Upper lobe of right lung (tissue), 1 donor: ENCODE measurements at regions of chr4 and their contacts with region 1.

Region 1: DNA sequence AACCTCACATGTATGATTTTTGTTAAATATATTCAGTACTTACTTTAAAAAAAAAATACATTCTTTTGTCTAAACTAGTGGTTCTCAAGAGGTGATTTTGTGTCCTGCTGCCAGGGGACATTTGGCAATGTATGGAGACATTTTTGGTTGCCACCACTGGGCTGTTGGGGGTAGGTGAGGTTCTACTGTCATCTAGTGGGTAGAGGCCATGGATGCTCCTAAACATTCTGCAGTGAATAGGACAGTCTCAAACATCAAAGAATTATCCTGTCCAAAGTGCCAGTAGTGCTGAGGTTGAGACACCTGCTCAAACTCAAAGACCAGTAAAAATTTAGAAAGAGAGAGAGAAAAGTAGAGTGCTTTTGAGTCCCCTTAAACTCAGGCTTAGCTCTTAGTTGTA is 32.9 kb upstream of the PGM2 start:
- DNase-seq: no peak
- ATAC-seq: peak; percentile 87
- H3K4me3 ChIP-seq: no peak overlapping the region
- H3K27ac ChIP-seq: no peak overlapping the region
- H3K4me1 ChIP-seq: no peaks in the 10 kb centered on the region
- H3K27me3 ChIP-seq: no peaks in the 10 kb centered on the region
- CTCF ChIP-seq: peak; percentile 47

Region 2: GRCh38 chr4:37603070-37603468 is 190.5 kb before region 1 on chr4:
- intact Hi-C with region 1: loop called (anchors 10 kb)
- DNase-seq: peak; percentile 91
- ATAC-seq: peak; percentile 97
- H3K4me3 ChIP-seq: no peak overlapping the region
- H3K27ac ChIP-seq: no peak overlapping the region
- H3K4me1 ChIP-seq: peaks cover 4% of the 10 kb centered on the region
- H3K27me3 ChIP-seq: no peaks in the 10 kb centered on the region
- CTCF ChIP-seq: peak; percentile 98

Region 3: DNA sequence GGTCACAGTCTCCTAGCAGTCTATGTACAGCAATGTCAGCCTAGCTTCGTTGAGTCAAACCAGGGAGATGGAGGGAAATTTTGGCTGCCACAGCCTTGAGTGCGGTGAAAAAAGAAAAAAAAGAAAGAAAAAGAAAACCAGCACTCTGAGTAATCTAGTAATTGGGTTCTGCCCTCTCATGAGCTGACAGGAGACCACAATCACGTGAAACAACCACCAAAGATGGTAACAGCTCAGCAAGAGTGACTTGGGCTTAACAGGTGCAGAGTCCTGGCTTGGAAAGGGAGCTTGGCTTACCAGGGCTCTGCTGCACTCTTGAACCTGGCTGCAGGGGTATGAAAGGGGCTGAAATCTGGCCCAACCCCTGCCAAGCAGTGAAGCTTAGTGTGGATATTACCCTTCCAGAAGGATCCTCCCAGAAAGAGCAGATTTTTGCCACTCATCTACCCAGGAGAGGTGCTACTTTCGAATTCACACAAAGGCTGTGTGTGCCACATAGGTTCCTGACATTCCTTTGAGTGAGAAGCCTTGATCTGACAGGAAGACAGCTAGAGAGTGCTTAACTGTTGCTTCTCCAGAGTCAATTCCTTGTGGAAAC is 517.0 kb after region 1 on chr4:
- intact Hi-C with region 1: no loop called
- DNase-seq: no peak
- ATAC-seq: peak; percentile 35
- H3K4me3 ChIP-seq: no peak overlapping the region
- H3K27ac ChIP-seq: no peak overlapping the region
- H3K4me1 ChIP-seq: no peaks in the 10 kb centered on the region
- H3K27me3 ChIP-seq: no peaks in the 10 kb centered on the region
- CTCF ChIP-seq: no peak